Activated CD4-positive, alpha-beta T cell treated with anti-CD3 and anti-CD28 coated beads, Interleukin-2, amount 10 ng/mL, durations not matched to agents 24 days and 14 days (primary cell): ENCODE measurements at regions of chr22 and their contacts with region 1.

Region 1: GRCh38 chr22:30968924-30969539 is at the start of gene TUG1:
- DNase-seq: peak; percentile 99
- H3K4me3 Mint-ChIP-seq: peak within 1 kb of the TSS; percentile 98
- H3K27ac Mint-ChIP-seq: peak within 1 kb of the TSS; percentile 99
- H3K4me1 Mint-ChIP-seq: peaks cover 39% of the 10 kb centered on the region
- H3K27me3 Mint-ChIP-seq: peaks cover 4% of the 10 kb centered on the region
- total RNA-seq, gene TUG1: 68.1 and 69.1 TPM in 2 replicates

Region 2: DNA sequence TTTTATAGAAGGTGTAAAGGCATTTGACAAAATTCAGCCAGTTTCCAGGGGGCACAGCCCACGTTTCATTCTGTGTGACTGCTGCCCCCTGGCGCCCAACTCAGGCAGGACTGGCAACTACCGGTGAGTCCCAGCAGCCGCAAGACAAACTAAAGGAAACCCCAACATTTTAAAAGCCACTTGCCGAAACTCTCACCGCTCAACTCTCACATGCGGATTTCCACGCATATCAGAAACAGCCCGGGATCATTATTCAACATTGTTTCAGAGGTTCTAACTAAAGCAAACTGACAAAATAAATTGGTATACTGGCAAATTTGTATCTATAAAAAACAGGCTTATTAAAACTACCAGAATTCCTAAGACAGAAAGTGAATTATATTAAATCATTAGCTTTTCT is 48.6 kb before region 1 on chr22:
- intact Hi-C with region 1: loop called (anchors 5 kb)
- DNase-seq: peak; percentile 95
- H3K4me3 Mint-ChIP-seq: peak overlapping the region; percentile 68
- H3K27ac Mint-ChIP-seq: no peak overlapping the region
- H3K4me1 Mint-ChIP-seq: peaks cover 10% of the 10 kb centered on the region
- H3K27me3 Mint-ChIP-seq: no peaks in the 10 kb centered on the region

Region 3: DNA sequence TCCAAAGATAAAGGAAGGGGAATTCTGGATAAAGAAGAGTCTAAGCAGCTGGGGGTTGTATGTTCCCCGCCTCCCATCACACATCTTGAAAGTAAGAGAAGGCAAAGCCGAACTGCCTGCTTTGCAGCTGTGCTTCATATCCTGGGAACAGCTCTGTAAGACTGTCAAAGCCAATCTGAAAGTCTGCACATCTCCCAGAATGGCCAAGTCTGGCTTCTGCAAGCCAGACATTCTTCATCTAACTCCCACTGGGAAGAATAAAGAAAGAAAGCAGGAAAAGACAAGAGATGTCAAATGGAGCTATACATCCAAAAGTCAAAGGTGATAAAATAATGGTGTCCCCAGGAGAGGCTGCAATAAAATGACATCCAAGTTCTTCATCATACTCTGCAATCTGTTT is 15.8 kb before region 1 on chr22:
- intact Hi-C with region 1: no loop called
- DNase-seq: no peak
- H3K4me3 Mint-ChIP-seq: no peak overlapping the region
- H3K27ac Mint-ChIP-seq: no peak overlapping the region
- H3K4me1 Mint-ChIP-seq: peaks cover 26% of the 10 kb centered on the region
- H3K27me3 Mint-ChIP-seq: no peaks in the 10 kb centered on the region

Region 4: DNA sequence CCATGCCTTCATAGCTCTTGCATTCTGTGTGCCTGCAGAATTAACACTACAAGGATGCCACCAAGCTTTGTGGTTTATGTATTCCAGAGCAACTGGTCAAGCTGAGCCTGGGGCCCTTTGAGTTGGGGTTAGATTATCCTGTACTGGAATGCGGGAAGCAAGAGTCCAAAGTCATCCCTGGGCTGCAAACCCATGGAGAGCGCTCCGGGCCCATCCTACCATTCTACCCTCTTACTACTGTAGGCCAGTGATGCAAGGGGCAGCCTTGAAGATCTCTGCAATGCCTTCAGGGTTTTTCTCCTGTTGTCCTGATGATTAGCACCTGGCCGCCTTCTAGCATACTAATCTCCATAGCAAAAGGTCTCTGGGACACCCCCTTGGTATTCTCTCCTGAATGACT is 51.3 kb after region 1 on chr22:
- intact Hi-C with region 1: no loop called
- DNase-seq: no peak
- H3K4me3 Mint-ChIP-seq: no peak overlapping the region
- H3K27ac Mint-ChIP-seq: no peak overlapping the region
- H3K4me1 Mint-ChIP-seq: no peaks in the 10 kb centered on the region
- H3K27me3 Mint-ChIP-seq: no peaks in the 10 kb centered on the region

Region 5: GRCh38 chr22:31122532-31123291 is 153.7 kb after region 1 on chr22 and contains the start of gene INPP5J:
- intact Hi-C with region 1: no loop called
- DNase-seq: no peak
- H3K4me3 Mint-ChIP-seq: no peak within 1 kb of the TSS
- H3K27ac Mint-ChIP-seq: no peak within 1 kb of the TSS
- H3K4me1 Mint-ChIP-seq: peaks cover 3% of the 10 kb centered on the region
- H3K27me3 Mint-ChIP-seq: no peaks in the 10 kb centered on the region
- total RNA-seq, gene INPP5J: 0.07 and 0.26 TPM in 2 replicates

Region 6: GRCh38 chr22:31160328-31160978 is 191.4 kb after region 1 on chr22:
- intact Hi-C with region 1: loop called (anchors 5 kb)
- DNase-seq: peak; percentile 73
- H3K4me3 Mint-ChIP-seq: peak overlapping the region; percentile 99
- H3K27ac Mint-ChIP-seq: peak overlapping the region; percentile 97
- H3K4me1 Mint-ChIP-seq: peaks cover 29% of the 10 kb centered on the region
- H3K27me3 Mint-ChIP-seq: peaks cover 4% of the 10 kb centered on the region

Region 7: GRCh38 chr22:31211862-31212730 is 243.1 kb after region 1 on chr22 and contains the start of gene LIMK2:
- intact Hi-C with region 1: loop called (anchors 2 kb)
- DNase-seq: peak; percentile 99
- H3K4me3 Mint-ChIP-seq: peak within 1 kb of the TSS; percentile 88
- H3K27ac Mint-ChIP-seq: peak within 1 kb of the TSS; percentile 86
- H3K4me1 Mint-ChIP-seq: peaks cover 43% of the 10 kb centered on the region
- H3K27me3 Mint-ChIP-seq: no peaks in the 10 kb centered on the region
- total RNA-seq, gene LIMK2: 34.2 and 35.9 TPM in 2 replicates